ENCODE measurements at regions of chr10 and their contacts with region 1.

Region 1: DNA sequence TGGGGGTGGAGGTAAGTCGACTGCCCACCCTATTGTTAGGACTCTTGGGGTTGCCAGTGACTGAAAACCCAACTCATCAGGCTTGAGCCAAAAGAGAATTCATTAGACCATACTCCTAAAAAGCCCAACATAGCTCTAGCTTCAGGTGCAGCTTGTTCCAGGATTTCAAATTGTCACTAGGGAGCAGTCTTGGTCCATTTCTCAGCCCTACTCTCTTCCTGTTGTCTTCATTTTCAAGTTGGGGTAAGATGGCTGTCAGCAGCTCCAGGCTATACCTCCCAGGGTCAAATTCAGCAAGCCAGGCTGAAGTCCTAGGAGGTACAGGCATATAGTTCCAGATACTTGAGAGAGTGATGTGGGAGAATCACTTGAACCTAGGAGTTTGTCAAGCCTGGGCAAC is 14.9 kb upstream of the COL13A1 start:
- DNase-seq: no peak
- H3K4me3 ChIP-seq: no peak overlapping the region
- H3K27ac ChIP-seq: no peak overlapping the region
- H3K4me1 ChIP-seq: no peaks in the 10 kb centered on the region
- H3K27me3 ChIP-seq: no peaks in the 10 kb centered on the region
- CTCF ChIP-seq: no peak
- POLR2A ChIP-seq: no peak

Region 2: GRCh38 chr10:69425511-69426298 is 361.1 kb before region 1 on chr10:
- intact Hi-C with region 1: no loop called
- DNase-seq: no peak
- H3K4me3 ChIP-seq: no peak overlapping the region
- H3K27ac ChIP-seq: peak overlapping the region; percentile 52 to 65
- H3K4me1 ChIP-seq: no peaks in the 10 kb centered on the region
- H3K27me3 ChIP-seq: no peaks in the 10 kb centered on the region
- CTCF ChIP-seq: no peak
- POLR2A ChIP-seq: no peak

Region 3: GRCh38 chr10:69914398-69915214 is 127.8 kb after region 1 on chr10:
- intact Hi-C with region 1: loop called (anchors 10 kb)
- DNase-seq: peak; percentile 69 to 72
- H3K4me3 ChIP-seq: no peak overlapping the region
- H3K27ac ChIP-seq: no peak overlapping the region
- H3K4me1 ChIP-seq: peaks cover 5 to 6% of the 10 kb centered on the region in 2 donors
- H3K27me3 ChIP-seq: no peaks in the 10 kb centered on the region
- CTCF ChIP-seq: peak; percentile 87 to 91 (median 88)
- POLR2A ChIP-seq: no peak

Measured in uterus (tissue), 4 donors.